ENCODE measurements at regions of chr10 and their contacts with region 1.

Region 1: DNA sequence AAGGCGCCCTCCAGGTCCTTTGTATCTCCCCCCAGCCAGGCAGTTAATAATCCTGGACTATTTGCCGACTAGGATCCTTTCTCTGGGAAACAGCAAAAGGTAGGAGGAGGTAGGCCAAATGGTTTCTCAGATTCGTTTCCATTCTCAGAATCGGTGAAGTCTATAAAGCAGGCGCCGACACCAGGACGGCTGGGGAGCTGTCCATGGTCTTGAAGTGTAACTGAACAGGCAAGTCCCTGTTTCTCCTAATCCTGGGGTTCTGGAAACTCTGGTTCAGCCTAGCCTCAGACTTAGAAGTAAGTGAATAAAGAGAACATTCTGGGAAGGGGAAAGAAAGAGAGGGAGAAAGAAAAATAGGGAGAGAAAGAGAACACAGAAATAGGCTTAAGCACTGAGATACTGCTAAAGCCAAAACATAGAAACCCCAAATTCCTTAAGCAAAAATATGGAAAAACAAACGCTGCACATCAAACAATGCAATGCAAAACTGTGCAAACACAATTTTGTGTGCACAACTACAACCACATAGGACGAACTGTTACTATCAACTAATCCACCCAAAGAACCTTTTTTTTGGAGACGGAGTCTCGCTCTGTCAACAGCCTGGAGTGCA is 11.1 kb upstream of the INA start:
- DNase-seq: peak; percentile 73 to 84
- H3K4me3 ChIP-seq: no peak overlapping the region
- H3K4me3 Mint-ChIP-seq: no peak overlapping the region
- H3K27ac Mint-ChIP-seq: no peak overlapping the region
- H3K4me1 ChIP-seq: no peaks in the 10 kb centered on the region
- H3K4me1 Mint-ChIP-seq: peaks cover 8% of the 10 kb centered on the region
- H3K27me3 ChIP-seq: no peaks in the 10 kb centered on the region
- H3K27me3 Mint-ChIP-seq: peaks cover 6% of the 10 kb centered on the region
- CTCF ChIP-seq: no peak

Region 2: GRCh38 chr10:103204353-103205255 is 61.2 kb before region 1 on chr10:
- CTCF ChIA-PET with region 1: no interaction called
- POLR2A ChIA-PET with region 1: no interaction called
- intact Hi-C with region 1: no loop called
- DNase-seq: peak in 1 of 2 experiments; percentile 19
- H3K4me3 ChIP-seq: no peak overlapping the region
- H3K4me3 Mint-ChIP-seq: no peak overlapping the region
- H3K27ac Mint-ChIP-seq: no peak overlapping the region
- H3K4me1 ChIP-seq: no peaks in the 10 kb centered on the region
- H3K4me1 Mint-ChIP-seq: no peaks in the 10 kb centered on the region
- H3K27me3 ChIP-seq: no peaks in the 10 kb centered on the region
- H3K27me3 Mint-ChIP-seq: no peaks in the 10 kb centered on the region
- CTCF ChIP-seq: no peak

Region 3: GRCh38 chr10:103278862-103279298 is 13.1 kb after region 1 on chr10:
- CTCF ChIA-PET with region 1: no interaction called
- POLR2A ChIA-PET with region 1: no interaction called
- intact Hi-C with region 1: loop called (anchors 1 kb)
- DNase-seq: peak in 1 of 2 experiments; percentile 66
- H3K4me3 ChIP-seq: no peak overlapping the region
- H3K4me3 Mint-ChIP-seq: peak overlapping the region; percentile 49
- H3K27ac Mint-ChIP-seq: no peak overlapping the region
- H3K4me1 ChIP-seq: 0 out of 2 replicates have a peak, but pooled peaks cover 4% of the 10 kb centered on the region
- H3K4me1 Mint-ChIP-seq: peaks cover 8% of the 10 kb centered on the region
- H3K27me3 ChIP-seq: no peaks in the 10 kb centered on the region
- H3K27me3 Mint-ChIP-seq: peaks cover 15% of the 10 kb centered on the region
- CTCF ChIP-seq: no peak